ENCODE measurements at regions of chr20 and their contacts with region 1.

Region 1: DNA sequence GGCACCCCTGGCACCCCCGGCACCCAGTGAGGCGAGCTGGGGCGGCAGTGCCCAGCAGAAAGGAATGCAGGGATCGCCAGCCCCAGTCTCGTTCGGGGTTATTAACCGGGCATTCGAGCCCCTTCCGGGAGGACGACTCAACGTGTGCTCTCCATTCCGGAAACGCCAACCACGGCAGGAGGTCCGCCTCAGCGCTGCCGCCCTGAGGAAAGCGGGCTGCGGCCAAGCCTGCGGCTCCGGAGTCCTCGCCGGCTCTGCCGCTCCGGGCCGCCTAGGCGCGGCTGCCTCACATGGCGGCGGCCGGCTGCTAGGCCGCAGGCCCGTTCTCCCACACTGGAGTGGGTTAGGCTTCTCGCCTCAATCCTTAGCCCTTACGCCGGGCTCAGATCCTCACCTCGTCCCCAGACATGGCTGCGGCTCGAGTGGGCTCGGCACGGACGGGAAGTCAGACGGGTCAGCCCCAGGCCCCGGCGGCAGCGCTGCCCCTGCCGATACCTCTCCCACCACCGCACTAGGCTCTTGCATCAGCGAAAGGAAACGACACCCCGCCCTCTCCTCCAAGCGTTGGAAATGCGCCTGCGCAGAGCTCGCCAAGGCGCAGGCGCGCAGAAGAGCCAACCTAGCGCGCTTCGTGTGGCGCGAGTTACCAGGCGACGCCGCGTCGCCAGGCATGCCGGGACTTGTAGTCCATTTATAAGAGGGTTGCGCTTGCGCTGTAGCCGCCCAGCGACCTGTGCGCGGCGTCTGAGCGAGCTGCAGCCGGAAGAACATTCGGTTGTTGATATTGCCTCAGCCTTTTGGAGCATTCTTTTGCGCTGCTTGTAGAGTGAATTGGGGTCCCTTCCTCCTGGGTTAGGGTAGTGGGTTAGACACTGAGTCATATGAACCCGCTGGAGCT is at the start of gene EIF2S2:
- DNase-seq: peak; percentile 91 to 100 (median 96)
- ATAC-seq: peak; percentile 87
- H3K4me3 ChIP-seq: peak within 1 kb of the TSS; percentile 93
- H3K4me3 Mint-ChIP-seq: peak within 1 kb of the TSS; percentile 96
- H3K27ac ChIP-seq: peak within 1 kb of the TSS; percentile 92
- H3K27ac Mint-ChIP-seq: peak within 1 kb of the TSS; percentile 95
- H3K4me1 ChIP-seq: peaks cover 37% of the 10 kb centered on the region
- H3K4me1 Mint-ChIP-seq: peaks cover 48% of the 10 kb centered on the region
- H3K27me3 ChIP-seq: no peaks in the 10 kb centered on the region
- H3K27me3 Mint-ChIP-seq: no peaks in the 10 kb centered on the region
- CTCF ChIP-seq: no peak
- total RNA-seq, gene EIF2S2: 21.8 to 23.2 TPM

Region 2: GRCh38 chr20:33489495-33490022 is 622.4 kb before region 1 on chr20:
- CTCF ChIA-PET with region 1: no interaction called
- POLR2A ChIA-PET with region 1: interaction called, 10 read pairs
- intact Hi-C with region 1: loop called in 1 of 2 experiments (anchors 5 kb)
- DNase-seq: peak; percentile 97 to 100 (median 99)
- ATAC-seq: peak; percentile 96
- H3K4me3 ChIP-seq: peak overlapping the region; percentile 57
- H3K4me3 Mint-ChIP-seq: peak overlapping the region; percentile 94
- H3K27ac ChIP-seq: peak overlapping the region; percentile 92 to 95
- H3K27ac Mint-ChIP-seq: peak overlapping the region; percentile 96
- H3K4me1 ChIP-seq: peaks cover 26% of the 10 kb centered on the region
- H3K4me1 Mint-ChIP-seq: peaks cover 36% of the 10 kb centered on the region
- H3K27me3 ChIP-seq: no peaks in the 10 kb centered on the region
- H3K27me3 Mint-ChIP-seq: no peaks in the 10 kb centered on the region
- CTCF ChIP-seq: no peak

Region 3: GRCh38 chr20:33719989-33720709 is 391.8 kb before region 1 on chr20 and contains the start of gene PXMP4:
- CTCF ChIA-PET with region 1: no interaction called
- POLR2A ChIA-PET with region 1: interaction called, 11 read pairs
- intact Hi-C with region 1: no loop called
- DNase-seq: peak; percentile 68 to 97 (median 82)
- ATAC-seq: peak; percentile 94
- H3K4me3 ChIP-seq: peak within 1 kb of the TSS; percentile 66
- H3K4me3 Mint-ChIP-seq: peak within 1 kb of the TSS; percentile 83
- H3K27ac ChIP-seq: peak within 1 kb of the TSS; percentile 2 to 72
- H3K27ac Mint-ChIP-seq: peak within 1 kb of the TSS; percentile 60
- H3K4me1 ChIP-seq: peaks cover 20% of the 10 kb centered on the region
- H3K4me1 Mint-ChIP-seq: peaks cover 18% of the 10 kb centered on the region
- H3K27me3 ChIP-seq: no peaks in the 10 kb centered on the region
- H3K27me3 Mint-ChIP-seq: no peaks in the 10 kb centered on the region
- CTCF ChIP-seq: peak; percentile 13
- total RNA-seq, gene PXMP4: 3.6 to 4.1 TPM

Region 4: GRCh38 chr20:33810885-33811777 is 300.8 kb before region 1 on chr20 and contains the start of gene CHMP4B:
- CTCF ChIA-PET with region 1: interaction called, 4 read pairs
- POLR2A ChIA-PET with region 1: interaction called, 40 read pairs
- intact Hi-C with region 1: loop called (anchors 1 to 2 kb)
- DNase-seq: peak; percentile 97 to 99 (median 98)
- ATAC-seq: peak; percentile 95
- H3K4me3 ChIP-seq: peak within 1 kb of the TSS; percentile 83
- H3K4me3 Mint-ChIP-seq: peak within 1 kb of the TSS; percentile 100
- H3K27ac ChIP-seq: peak within 1 kb of the TSS; percentile 38 to 66
- H3K27ac Mint-ChIP-seq: peak within 1 kb of the TSS; percentile 93
- H3K4me1 ChIP-seq: peaks cover 45% of the 10 kb centered on the region
- H3K4me1 Mint-ChIP-seq: peaks cover 49% of the 10 kb centered on the region
- H3K27me3 ChIP-seq: no peaks in the 10 kb centered on the region
- H3K27me3 Mint-ChIP-seq: no peaks in the 10 kb centered on the region
- CTCF ChIP-seq: no peak
- total RNA-seq, gene CHMP4B: 44.2 to 49.3 TPM

Region 5: DNA sequence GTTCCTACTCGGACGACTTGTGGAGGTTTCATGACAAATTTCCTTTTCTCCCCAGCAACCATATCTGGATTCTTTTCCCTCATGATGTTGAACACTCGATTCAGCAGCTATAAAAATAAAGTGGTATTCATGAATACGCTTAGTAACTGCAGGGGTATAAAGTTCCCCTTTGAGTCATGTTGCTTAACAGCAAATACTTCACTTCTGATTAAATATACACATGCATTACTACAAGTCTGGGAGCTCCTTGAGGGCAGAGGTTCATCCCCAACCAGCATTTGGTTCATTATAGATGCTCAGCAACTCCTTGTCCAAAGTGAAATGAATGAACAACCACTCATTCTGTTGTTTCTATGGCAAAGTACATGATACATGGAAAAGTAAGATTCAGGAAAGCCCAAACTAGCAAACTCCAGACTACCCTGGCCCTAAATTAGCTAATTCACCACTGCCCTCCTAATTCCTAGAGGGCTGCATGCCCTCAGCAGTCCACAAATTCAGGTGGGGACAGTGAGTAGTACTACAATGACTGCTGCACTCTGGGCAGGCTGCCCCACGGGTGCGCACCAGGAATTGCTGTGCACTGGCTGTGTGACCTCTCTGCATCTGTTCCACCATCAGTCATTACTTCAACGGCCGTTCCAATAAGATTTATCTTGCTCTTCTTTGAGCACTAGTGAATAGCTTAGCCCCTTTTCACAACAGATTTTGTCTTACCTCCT is 15.1 kb before region 1 on chr20:
- CTCF ChIA-PET with region 1: no interaction called
- POLR2A ChIA-PET with region 1: interaction called, 23 read pairs
- intact Hi-C with region 1: no loop called
- DNase-seq: no peak
- ATAC-seq: no peak
- H3K4me3 ChIP-seq: no peak overlapping the region
- H3K4me3 Mint-ChIP-seq: no peak overlapping the region
- H3K27ac ChIP-seq: no peak overlapping the region
- H3K27ac Mint-ChIP-seq: peak overlapping the region; percentile 55
- H3K4me1 ChIP-seq: no peaks in the 10 kb centered on the region
- H3K4me1 Mint-ChIP-seq: peaks cover 14% of the 10 kb centered on the region
- H3K27me3 ChIP-seq: no peaks in the 10 kb centered on the region
- H3K27me3 Mint-ChIP-seq: no peaks in the 10 kb centered on the region
- CTCF ChIP-seq: no peak

Region 6: DNA sequence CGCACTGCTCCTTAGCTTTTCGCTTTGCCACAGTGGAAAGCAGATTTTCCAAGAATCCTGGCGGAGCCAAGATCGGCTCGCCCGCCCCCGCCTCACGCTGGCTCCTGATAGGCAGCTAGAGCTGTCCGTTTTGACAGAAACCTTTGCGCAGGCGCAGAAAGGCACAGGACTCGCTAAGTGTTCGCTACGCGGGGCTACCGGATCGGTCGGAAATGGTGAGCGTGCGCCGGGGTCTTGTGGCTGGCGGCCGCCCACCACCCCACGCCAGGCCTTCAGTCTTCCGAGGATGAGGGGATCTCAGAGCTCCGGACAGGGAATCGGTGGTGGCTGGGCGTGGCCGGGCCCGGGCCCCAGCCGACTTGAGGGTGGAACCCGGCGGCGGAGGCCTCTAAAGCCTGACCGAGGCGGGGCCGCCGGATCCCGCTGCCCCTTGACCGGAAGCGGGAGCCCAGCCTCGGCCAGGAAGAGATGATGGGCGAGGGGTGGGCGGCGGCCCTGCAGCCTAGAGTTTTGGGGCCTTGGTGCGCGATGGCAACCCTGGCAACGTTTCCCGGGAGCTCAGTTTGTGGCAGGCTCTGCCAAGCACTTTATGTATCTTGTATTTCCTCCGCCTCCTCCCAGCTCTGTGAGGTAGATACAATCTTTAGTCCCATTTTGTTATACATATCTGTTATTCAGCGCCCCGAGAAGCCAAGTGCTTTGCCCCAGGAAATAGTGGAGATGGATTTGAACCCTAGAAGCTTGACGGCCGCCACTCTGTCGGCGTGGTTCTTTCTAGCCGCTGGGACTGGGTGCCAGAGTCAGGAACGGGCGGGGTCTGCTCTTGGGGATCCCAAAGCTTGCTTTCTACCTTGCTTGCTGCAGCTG is 404.5 kb after region 1 on chr20 and contains the start of gene DYNLRB1:
- CTCF ChIA-PET with region 1: no interaction called
- POLR2A ChIA-PET with region 1: interaction called, 5 read pairs
- intact Hi-C with region 1: loop called (anchors 10 kb)
- DNase-seq: peak; percentile 88 to 96 (median 94)
- ATAC-seq: peak; percentile 74
- H3K4me3 ChIP-seq: peak within 1 kb of the TSS; percentile 82
- H3K4me3 Mint-ChIP-seq: peak within 1 kb of the TSS; percentile 99
- H3K27ac ChIP-seq: peak within 1 kb of the TSS; percentile 60 to 80
- H3K27ac Mint-ChIP-seq: peak within 1 kb of the TSS; percentile 94
- H3K4me1 ChIP-seq: peaks cover 30% of the 10 kb centered on the region
- H3K4me1 Mint-ChIP-seq: peaks cover 70% of the 10 kb centered on the region
- H3K27me3 ChIP-seq: no peaks in the 10 kb centered on the region
- H3K27me3 Mint-ChIP-seq: no peaks in the 10 kb centered on the region
- CTCF ChIP-seq: no peak
- total RNA-seq, gene DYNLRB1: 38.3 to 40.3 TPM